B cell (primary cell): ENCODE measurements at regions of chr10 and their contacts with region 1.

Region 1: DNA sequence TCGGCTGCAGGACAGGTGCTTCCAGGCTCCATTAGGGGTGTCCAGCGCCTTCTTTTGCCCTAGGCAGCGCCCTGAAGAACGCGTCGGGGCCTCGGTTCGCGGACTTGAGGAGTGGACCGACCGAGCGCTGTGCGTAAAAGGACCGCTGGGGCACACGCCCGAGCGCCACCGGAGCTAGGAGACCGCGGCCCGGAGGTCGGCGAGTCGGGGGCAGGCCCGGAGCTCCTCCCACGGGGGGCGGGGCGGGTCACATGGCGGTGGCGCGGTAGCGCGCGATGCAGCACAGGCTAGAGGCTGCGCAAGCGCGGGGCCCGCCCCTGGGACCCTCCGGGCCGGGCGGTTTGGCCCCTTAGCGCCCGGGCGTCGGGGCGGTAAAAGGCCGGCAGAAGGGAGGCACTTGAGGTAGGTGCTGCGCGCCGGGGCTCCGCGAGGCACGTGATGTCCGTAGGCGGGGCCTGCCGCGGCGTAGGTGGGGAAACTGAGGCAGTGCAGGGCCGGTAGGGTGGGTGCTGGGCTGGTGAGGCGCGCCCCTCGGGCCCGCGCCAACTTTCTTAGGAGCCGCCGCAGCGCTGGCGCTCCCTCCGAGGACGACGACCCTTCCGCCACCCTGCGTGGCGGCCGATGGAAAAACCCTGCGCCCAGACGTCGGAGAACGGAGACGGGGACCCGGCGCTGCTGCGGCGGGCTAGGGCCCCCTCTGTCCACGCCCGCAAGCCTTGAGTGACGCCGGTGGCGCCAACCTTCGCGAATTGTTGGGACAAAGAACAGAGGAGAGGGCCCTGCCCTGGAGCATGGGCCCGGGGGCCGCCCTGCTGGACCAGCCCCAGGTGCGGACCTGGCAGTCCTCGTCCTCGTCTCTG is at the start of gene PRXL2A:
- DNase-seq: peak; percentile 83
- ATAC-seq: peak; percentile 98
- H3K4me3 ChIP-seq: peak within 1 kb of the TSS; percentile 55 to 82 (median 77)
- H3K4me3 Mint-ChIP-seq: peak within 1 kb of the TSS; percentile 91
- H3K27ac ChIP-seq: peak within 1 kb of the TSS in 1 of 2 donors; percentile 13
- H3K27ac Mint-ChIP-seq: peak within 1 kb of the TSS; percentile 64
- H3K4me1 ChIP-seq: peaks cover 6 to 15% of the 10 kb centered on the region in 2 donors
- H3K4me1 Mint-ChIP-seq: peaks cover 13% of the 10 kb centered on the region
- H3K27me3 ChIP-seq: no peaks in the 10 kb centered on the region
- H3K27me3 Mint-ChIP-seq: peaks cover 5% of the 10 kb centered on the region
- CTCF ChIP-seq: no peak
- total RNA-seq, gene PRXL2A: 9.4 and 11.2 TPM in 2 replicates

Region 2: GRCh38 chr10:80421707-80422536 is 13.4 kb after region 1 on chr10:
- CTCF ChIA-PET with region 1: interaction called, 11 read pairs
- POLR2A ChIA-PET with region 1: interaction called, 4 read pairs
- intact Hi-C with region 1: no loop called
- DNase-seq: peak; percentile 50
- ATAC-seq: peak; percentile 78
- H3K4me3 ChIP-seq: peak overlapping the region in 1 of 5 experiments; percentile 29
- H3K4me3 Mint-ChIP-seq: peak overlapping the region; percentile 15
- H3K27ac ChIP-seq: no peak overlapping the region
- H3K27ac Mint-ChIP-seq: peak overlapping the region; percentile 53
- H3K4me1 ChIP-seq: peaks cover 24 to 31% of the 10 kb centered on the region in 2 donors
- H3K4me1 Mint-ChIP-seq: peaks cover 30% of the 10 kb centered on the region
- H3K27me3 ChIP-seq: no peaks in the 10 kb centered on the region
- H3K27me3 Mint-ChIP-seq: no peaks in the 10 kb centered on the region
- CTCF ChIP-seq: no peak